ENCODE measurements at regions of chr4 and their contacts with region 1.

Region 1: DNA sequence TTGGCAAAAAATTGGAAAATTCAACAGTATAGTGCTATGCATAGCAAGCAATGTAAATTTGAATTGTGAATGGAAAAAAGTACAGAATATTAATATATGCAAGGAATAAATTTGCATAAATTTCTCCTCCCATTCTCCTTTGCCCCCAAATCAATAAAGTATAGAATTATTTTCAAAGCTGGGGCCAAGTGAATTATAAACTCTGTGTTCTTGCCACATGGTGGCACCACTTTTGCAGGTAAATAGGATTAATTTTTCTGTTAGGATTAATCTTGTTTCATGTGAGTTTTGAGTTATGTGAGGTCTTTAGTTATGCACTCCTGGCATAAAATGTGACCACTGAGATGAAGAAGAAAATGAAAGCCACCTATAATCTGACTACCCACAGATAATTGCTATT is 19.9 kb downstream of the COPS4 start:
- DNase-seq: no peak
- H3K4me3 ChIP-seq: no peak overlapping the region
- H3K27ac ChIP-seq: no peak overlapping the region
- H3K4me1 ChIP-seq: no peaks in the 10 kb centered on the region
- H3K27me3 ChIP-seq: no peaks in the 10 kb centered on the region
- CTCF ChIP-seq: peak; percentile 29 to 38

Region 2: DNA sequence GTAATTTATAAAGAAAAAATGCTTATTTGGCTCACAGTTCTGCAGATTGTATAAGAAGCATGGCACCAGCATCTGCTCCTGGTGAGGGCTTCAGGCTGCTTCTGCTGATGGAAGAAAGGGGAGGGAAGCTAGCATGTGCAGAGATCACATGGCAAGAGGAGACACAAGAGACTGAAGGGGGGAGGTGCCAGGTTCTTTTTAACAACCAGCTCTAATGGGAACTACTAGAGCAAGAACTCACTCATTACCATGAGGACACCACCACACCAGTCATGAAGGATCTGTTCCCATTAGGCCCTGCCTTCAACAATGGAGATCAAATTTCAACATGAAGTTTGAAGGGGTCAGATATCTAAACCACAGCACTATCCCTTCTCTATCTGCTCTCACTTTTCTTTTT is 29.4 kb before region 1 on chr4:
- CTCF ChIA-PET with region 1: no interaction called
- dilution Hi-C with region 1: no loop called
- in situ Hi-C with region 1: no loop called
- intact Hi-C with region 1: no loop called
- DNase-seq: no peak
- H3K4me3 ChIP-seq: no peak overlapping the region
- H3K27ac ChIP-seq: no peak overlapping the region
- H3K4me1 ChIP-seq: no peaks in the 10 kb centered on the region
- H3K27me3 ChIP-seq: no peaks in the 10 kb centered on the region
- CTCF ChIP-seq: no peak

Region 3: DNA sequence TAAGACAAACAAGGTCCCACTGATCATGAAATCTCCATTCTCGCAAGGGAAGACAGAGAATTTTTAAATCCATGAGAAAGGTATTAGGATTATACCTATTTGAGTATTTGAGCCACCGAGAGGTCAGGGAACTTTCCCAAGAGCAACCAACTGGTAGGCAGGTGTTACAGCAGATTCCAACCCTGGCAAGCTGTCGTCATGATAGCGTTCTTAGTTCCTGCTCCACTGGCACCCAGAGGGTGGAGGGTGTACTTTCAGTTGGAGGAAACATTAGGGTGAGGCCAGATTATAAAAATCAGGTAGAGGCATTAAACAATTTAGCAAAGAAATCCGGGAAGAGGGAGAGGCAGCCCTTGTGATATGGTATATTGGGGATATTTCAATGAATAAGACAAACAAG is 206.4 kb after region 1 on chr4:
- CTCF ChIA-PET with region 1: no interaction called
- dilution Hi-C with region 1: no loop called
- in situ Hi-C with region 1: loop called in 1 of 2 experiments (anchors 10 kb)
- intact Hi-C with region 1: loop called (anchors 2 kb)
- DNase-seq: no peak
- H3K4me3 ChIP-seq: no peak overlapping the region
- H3K27ac ChIP-seq: no peak overlapping the region
- H3K4me1 ChIP-seq: peaks cover 9% of the 10 kb centered on the region
- H3K27me3 ChIP-seq: no peaks in the 10 kb centered on the region
- CTCF ChIP-seq: no peak

Region 4: DNA sequence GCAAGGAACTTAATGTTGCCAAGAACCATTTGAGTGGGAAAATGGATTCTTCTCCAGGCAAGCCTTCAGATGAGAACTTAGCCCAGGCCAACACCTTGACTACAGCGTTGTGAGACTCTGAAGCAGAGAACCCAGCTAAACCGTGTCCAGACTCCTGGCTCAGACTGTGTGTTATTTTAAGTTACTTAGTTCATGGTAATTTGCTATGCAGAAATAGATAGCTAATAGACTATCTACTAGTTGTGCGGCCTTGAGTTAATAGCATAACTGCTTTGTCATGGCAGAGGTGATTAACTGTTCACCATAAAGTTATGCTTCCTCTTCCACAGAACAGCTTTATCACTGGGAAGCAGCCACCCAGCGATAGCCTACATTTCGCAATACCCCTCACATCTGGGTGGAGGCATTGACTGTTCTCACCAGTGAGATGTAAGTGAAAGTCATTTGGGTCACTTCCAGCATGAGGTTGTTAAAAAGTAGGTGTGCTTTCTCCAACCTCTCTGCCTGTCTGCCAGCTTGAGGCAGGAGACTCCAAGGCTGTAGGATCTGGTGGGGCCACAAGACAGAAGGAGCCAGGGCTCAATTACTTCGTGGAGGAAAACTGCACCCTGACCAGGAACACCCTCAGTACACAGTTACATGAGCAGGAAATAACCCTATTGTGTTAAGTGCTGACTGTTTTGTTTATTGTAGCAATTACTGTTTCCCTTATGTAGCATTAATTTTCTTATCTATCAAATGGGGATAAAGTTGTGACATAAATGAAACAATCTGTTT is 575.2 kb after region 1 on chr4:
- CTCF ChIA-PET with region 1: no interaction called
- dilution Hi-C with region 1: no loop called
- in situ Hi-C with region 1: no loop called
- intact Hi-C with region 1: no loop called
- DNase-seq: peak; percentile 57
- H3K4me3 ChIP-seq: no peak overlapping the region
- H3K27ac ChIP-seq: no peak overlapping the region
- H3K4me1 ChIP-seq: peaks cover 7% of the 10 kb centered on the region
- H3K27me3 ChIP-seq: no peaks in the 10 kb centered on the region
- CTCF ChIP-seq: no peak